Endothelial cell of umbilical vein (primary cell): ENCODE measurements at regions of chr1 and their contacts with region 1.

Region 1: DNA sequence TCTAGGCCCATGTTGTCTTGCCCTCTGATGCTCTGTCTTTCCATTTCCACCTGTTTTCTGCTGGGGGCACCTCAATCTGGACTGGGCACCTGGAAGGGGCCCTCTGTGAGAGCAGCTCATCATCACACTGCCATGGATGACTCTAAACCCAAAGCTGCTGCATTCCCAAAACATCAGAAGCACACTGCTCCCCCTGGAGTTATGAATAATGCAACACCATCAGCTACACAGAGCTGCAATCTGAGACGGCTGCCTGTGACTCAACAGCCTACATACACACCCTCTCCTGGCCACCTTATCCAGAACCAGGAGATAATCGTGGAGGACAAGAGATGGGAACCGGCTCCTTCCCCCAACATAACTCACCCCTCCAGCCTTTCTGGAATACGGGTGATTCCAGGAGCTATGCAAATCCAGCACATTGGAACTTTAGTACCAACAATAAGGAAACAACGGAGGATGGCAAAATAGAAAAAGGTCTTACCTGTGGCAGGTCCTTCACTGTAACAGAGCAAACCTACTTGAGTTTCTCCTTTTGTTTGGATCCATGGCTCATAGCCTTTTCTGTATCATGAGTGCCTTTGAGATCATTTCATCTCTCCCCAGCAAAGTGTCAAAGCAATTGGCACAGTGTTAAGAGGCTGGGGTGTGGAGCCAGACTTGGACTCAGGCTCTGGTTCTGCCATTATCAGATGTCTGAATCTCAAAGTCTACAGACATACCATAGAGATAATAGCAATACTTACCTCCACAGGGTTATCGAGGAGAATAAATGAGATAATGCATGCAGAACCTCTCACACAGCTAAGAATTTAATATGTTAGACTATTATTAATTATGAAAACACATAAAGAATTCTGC is 29.3 kb downstream of the AK2 start:
- DNase-seq: peak; percentile 89
- H3K4me3 ChIP-seq: no peak overlapping the region
- H3K27ac ChIP-seq: no peak overlapping the region
- H3K4me1 ChIP-seq: peaks cover 41% of the 10 kb centered on the region
- H3K27me3 ChIP-seq: no peaks in the 10 kb centered on the region
- CTCF ChIP-seq: peak; percentile 60 to 62
- POLR2A ChIP-seq: peak; percentile 28

Region 2: GRCh38 chr1:32876341-32877210 is 130.8 kb before region 1 on chr1:
- CTCF ChIA-PET with region 1: interaction called, 28 read pairs
- POLR2A ChIA-PET with region 1: no interaction called
- dilution Hi-C with region 1: no loop called
- intact Hi-C with region 1: loop called (anchors 1 kb)
- DNase-seq: peak; percentile 58
- H3K4me3 ChIP-seq: no peak overlapping the region
- H3K27ac ChIP-seq: no peak overlapping the region
- H3K4me1 ChIP-seq: no peaks in the 10 kb centered on the region
- H3K27me3 ChIP-seq: peaks cover 6 to 9% of the 10 kb centered on the region in 2 experiments
- CTCF ChIP-seq: peak; percentile 89 to 99
- POLR2A ChIP-seq: no peak

Region 3: DNA sequence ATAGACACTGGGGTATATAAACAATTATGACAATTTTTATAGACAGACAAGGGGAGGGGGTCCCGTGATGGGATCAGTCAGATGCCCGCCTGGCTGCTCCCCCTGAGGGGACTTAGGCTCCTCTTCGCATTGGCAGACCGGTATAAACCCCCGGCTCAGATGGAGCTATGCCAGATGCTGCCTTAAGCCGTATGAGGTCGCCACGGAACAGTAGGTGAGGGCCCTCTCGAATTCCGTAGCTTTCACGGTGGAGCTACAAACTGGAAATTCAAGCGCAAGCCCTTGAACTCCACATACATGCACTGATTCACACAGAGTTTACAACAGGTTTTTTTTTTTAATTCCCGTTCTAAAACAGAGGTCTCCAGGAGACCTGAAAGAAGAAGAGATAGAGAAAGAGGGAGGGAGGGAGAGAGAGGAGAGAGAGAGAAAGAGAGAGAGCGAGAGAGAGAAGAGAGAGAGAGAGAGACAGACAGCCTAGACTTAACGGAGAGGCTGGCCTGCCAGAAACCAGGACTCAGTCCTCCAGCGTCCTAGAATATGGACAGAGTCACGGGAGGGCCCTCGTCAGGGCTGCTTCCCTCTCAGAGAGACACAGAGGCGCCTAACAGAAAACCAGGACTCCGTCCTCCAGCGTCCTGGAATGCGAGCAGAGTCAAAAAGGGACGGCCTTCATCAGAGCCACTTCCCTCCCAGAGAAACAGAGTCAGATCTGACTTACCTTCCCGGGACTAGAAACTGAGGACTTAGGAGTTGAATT is 81.8 kb before region 1 on chr1:
- CTCF ChIA-PET with region 1: interaction called, 340 read pairs
- POLR2A ChIA-PET with region 1: no interaction called
- dilution Hi-C with region 1: no loop called
- intact Hi-C with region 1: no loop called
- DNase-seq: peak; percentile 14
- H3K4me3 ChIP-seq: no peak overlapping the region
- H3K27ac ChIP-seq: no peak overlapping the region
- H3K4me1 ChIP-seq: no peaks in the 10 kb centered on the region
- H3K27me3 ChIP-seq: peaks cover 2 to 3% of the 10 kb centered on the region in 2 experiments
- CTCF ChIP-seq: no peak
- POLR2A ChIP-seq: no peak

Region 4: GRCh38 chr1:32953495-32953894 is 53.9 kb before region 1 on chr1:
- CTCF ChIA-PET with region 1: interaction called, 37 read pairs
- POLR2A ChIA-PET with region 1: interaction called, 12 read pairs
- dilution Hi-C with region 1: loop called (anchors 10 kb)
- intact Hi-C with region 1: no loop called
- DNase-seq: peak; percentile 91
- H3K4me3 ChIP-seq: no peak overlapping the region
- H3K27ac ChIP-seq: peak overlapping the region; percentile 45
- H3K4me1 ChIP-seq: peaks cover 20% of the 10 kb centered on the region
- H3K27me3 ChIP-seq: no peaks in the 10 kb centered on the region
- CTCF ChIP-seq: no peak
- POLR2A ChIP-seq: no peak

Region 5: DNA sequence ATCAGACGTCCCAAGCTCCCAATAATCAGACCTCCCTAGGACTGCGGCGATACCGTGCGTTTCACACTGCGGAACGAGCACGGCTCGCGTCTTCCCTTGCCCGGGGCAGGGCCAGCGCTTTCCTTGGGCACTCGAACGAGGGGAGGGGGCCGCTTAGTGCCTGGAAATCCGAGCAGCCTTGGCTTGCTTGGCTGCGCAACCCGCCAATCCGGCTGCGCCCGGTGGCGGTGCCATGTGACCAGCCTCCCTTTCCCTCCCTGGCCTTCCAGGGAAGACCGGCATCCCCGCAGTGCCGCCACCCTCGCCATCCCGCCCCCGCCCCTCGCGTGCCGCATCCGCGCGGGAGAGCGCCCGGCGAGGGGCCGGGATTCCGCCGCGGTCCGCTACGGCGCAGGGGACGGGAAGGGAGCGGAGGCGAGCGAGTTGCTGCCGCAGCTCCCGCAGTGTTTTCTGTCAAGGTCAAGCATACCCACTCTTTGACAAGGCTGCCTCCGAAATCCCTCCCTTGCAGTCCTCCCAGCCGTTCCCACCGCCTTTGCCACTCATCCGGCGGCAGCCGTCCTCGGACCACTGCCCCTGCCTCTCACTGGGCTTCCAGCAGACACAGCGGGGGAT is 34.5 kb before region 1 on chr1:
- CTCF ChIA-PET with region 1: interaction called, 16 read pairs
- POLR2A ChIA-PET with region 1: interaction called, 3 read pairs
- dilution Hi-C with region 1: no loop called
- intact Hi-C with region 1: no loop called
- DNase-seq: peak; percentile 88
- H3K4me3 ChIP-seq: peak overlapping the region in 2 of 3 experiments; percentile 18 to 56
- H3K27ac ChIP-seq: no peak overlapping the region
- H3K4me1 ChIP-seq: no peaks in the 10 kb centered on the region
- H3K27me3 ChIP-seq: no peaks in the 10 kb centered on the region
- CTCF ChIP-seq: no peak
- POLR2A ChIP-seq: peak; percentile 15

Region 6: GRCh38 chr1:32992489-32993323 is 14.7 kb before region 1 on chr1:
- CTCF ChIA-PET with region 1: interaction called, 47 read pairs
- POLR2A ChIA-PET with region 1: interaction called, 7 read pairs
- dilution Hi-C with region 1: no loop called
- intact Hi-C with region 1: loop called (anchors 1 kb)
- DNase-seq: peak; percentile 46
- H3K4me3 ChIP-seq: no peak overlapping the region
- H3K27ac ChIP-seq: peak overlapping the region; percentile 36
- H3K4me1 ChIP-seq: peaks cover 41% of the 10 kb centered on the region
- H3K27me3 ChIP-seq: no peaks in the 10 kb centered on the region
- CTCF ChIP-seq: no peak
- POLR2A ChIP-seq: no peak

Region 7: GRCh38 chr1:33036526-33037503 is 29.4 kb after region 1 on chr1 and contains the start of gene AK2:
- CTCF ChIA-PET with region 1: no interaction called
- POLR2A ChIA-PET with region 1: no interaction called
- dilution Hi-C with region 1: no loop called
- intact Hi-C with region 1: no loop called
- DNase-seq: peak; percentile 99
- H3K4me3 ChIP-seq: peak within 1 kb of the TSS; percentile 56 to 77 (median 65)
- H3K27ac ChIP-seq: peak within 1 kb of the TSS; percentile 52
- H3K4me1 ChIP-seq: peaks cover 15% of the 10 kb centered on the region
- H3K27me3 ChIP-seq: no peaks in the 10 kb centered on the region
- CTCF ChIP-seq: no peak
- POLR2A ChIP-seq: peak; percentile 18
- total RNA-seq, gene AK2: 131 and 134 TPM in 2 replicates

Region 8: DNA sequence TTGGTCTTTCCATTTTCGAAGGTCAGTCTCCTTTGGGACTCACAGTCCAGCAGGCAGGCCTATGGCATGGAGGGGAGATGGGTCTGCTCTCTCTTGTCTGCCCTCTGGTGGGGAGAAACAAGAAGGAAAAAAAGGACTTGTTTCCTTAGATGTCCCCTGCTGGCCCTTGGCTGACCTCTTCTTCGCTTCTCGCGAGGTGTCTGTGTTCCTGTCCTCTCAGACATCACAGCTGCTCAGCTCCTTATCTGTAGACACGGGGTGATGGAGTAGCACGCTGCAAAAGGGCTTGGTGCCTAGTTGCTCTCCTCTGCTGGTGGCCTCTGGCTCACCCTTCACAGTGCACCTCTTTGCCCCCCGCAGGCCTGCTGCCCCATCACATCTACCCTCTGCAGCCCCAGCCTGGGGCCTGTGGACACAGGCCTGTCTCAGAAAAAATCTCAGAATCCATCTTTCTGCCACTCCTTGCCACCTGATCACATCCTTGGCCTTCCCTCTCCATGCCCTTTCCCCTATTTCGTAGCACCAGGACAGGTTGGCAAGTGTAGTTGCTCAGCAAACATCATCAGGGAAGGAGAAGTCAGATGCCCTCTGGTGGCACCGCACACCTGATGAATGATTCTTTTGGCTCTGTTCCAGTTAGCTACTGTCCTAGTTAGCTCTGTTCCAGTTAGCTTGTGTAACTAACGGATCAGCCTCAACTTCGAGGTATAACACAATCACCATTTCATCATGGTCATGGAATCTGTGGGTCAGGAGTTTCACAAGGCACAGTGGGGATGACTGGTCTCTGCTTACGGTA is 48.0 kb after region 1 on chr1:
- CTCF ChIA-PET with region 1: interaction called, 5 read pairs
- POLR2A ChIA-PET with region 1: no interaction called
- dilution Hi-C with region 1: no loop called
- intact Hi-C with region 1: loop called (anchors 1 kb)
- DNase-seq: peak; percentile 86
- H3K4me3 ChIP-seq: no peak overlapping the region
- H3K27ac ChIP-seq: no peak overlapping the region
- H3K4me1 ChIP-seq: peaks cover 2% of the 10 kb centered on the region
- H3K27me3 ChIP-seq: no peaks in the 10 kb centered on the region
- CTCF ChIP-seq: peak; percentile 65 to 78
- POLR2A ChIP-seq: no peak